ENCODE measurements at regions of chr4 and their contacts with region 1.

Region 1: GRCh38 chr4:4488405-4489404 is 53.1 kb downstream of the STX18 start:
- DNase-seq: no peak
- H3K4me3 ChIP-seq: no peak overlapping the region
- H3K27ac ChIP-seq: no peak overlapping the region
- H3K4me1 ChIP-seq: peaks cover 0 to 20% (median 3%) of the 10 kb centered on the region in 4 donors
- H3K27me3 ChIP-seq: no peaks in the 10 kb centered on the region
- CTCF ChIP-seq: peak; percentile 69 to 88 (median 79)
- EP300 ChIP-seq: no peak
- POLR2A ChIP-seq: no peak

Region 2: DNA sequence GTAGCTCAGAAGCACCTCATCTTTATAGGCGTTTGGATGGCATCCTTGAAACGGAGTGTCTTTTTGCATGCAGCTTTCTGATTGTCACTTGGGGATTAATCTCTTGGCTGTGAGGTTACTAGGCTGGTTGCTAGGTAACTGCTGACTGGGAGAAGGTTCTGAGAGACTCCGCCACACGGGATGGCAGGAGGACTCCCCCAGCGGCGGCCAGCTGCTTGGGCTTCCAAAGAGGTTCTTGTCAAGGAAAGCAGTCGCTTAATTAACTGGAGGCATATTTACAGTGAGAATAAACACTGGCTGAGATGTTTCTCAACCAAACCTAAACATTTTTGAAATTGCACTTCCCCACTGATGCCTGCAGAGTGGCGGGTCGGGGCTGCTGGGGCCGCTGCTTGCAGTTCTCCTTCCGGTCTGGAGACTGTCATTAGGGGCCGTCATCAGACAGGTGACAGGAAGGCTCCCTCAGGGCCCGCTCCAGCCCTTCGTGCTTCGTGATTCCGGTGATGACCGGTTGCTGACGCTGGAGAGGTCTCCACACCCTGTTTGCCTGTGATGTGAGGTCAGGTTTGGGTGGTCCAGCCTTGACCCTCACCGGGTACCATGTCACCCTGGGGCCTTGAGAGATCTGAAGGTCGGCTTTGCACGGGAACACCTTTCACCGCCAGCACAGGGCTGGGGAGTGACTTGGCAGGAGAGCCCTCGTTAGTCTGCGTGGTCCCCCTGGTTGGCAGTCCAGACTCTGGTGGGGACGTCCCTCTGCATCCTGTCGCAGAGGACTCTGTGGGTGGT is 92.7 kb before region 1 on chr4:
- intact Hi-C with region 1: no loop called
- DNase-seq: no peak
- H3K4me3 ChIP-seq: no peak overlapping the region
- H3K27ac ChIP-seq: no peak overlapping the region
- H3K4me1 ChIP-seq: peaks cover 0 to 5% (median 0%) of the 10 kb centered on the region in 4 donors
- H3K27me3 ChIP-seq: peaks cover 0 to 90% (median 0%) of the 10 kb centered on the region in 4 donors
- CTCF ChIP-seq: no peak
- EP300 ChIP-seq: no peak
- POLR2A ChIP-seq: no peak

Region 3: DNA sequence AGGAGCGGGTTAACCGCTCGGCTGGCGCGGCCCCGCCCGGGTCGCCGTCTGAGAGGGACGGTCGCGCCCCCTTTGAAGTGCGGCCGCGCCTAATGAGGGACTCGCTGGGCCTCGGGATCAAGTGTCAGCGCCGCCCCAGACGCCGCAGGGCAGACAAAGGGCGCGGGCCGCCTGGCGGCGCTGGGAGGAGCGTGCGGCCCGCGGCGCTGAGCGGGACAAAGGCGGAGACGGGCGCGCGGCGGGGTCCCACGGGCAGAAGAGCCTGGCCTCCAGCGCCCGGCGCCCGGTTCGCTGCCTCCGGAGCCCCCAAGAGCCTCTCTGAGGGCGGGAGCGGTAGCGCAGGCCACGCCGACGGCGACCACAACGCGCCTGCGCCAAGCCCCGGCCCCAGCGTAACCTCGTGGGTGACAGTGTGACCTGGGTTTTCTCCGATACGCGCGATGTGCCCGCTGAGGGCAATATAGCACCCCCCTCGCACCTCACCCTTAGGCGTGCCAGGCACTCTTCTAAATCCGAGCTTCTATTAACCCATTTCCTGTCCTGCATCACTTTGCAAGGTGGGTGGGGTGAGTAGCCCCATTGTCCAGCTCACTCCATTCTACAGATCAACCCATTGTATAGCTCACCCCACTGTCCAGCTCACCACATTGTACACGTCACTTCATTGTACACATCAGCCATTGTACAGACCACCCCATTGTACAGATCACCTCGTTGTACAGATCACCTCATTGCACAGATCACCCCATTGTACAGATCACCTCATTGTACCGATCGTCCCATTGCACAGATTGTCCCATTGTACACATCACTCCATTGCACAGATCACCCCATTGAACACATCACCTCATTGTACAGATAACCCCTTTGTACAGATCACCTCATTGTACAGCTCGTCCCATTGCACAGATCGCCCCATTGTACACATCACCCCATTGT is 86.8 kb after region 1 on chr4:
- intact Hi-C with region 1: loop called (anchors 10 kb)
- DNase-seq: no peak
- H3K4me3 ChIP-seq: peak overlapping the region; percentile 63 to 80 (median 73)
- H3K27ac ChIP-seq: peak overlapping the region; percentile 54 to 80 (median 65)
- H3K4me1 ChIP-seq: peaks cover 0 to 6% (median 2%) of the 10 kb centered on the region in 4 donors
- H3K27me3 ChIP-seq: no peaks in the 10 kb centered on the region
- CTCF ChIP-seq: peak; percentile 40 to 71 (median 47)
- EP300 ChIP-seq: no peak
- POLR2A ChIP-seq: no peak

Region 4: GRCh38 chr4:4859843-4860802 is 371.4 kb after region 1 on chr4:
- intact Hi-C with region 1: loop called (anchors 10 kb)
- DNase-seq: no peak
- H3K4me3 ChIP-seq: peak overlapping the region; percentile 60 to 76 (median 70)
- H3K27ac ChIP-seq: peak overlapping the region; percentile 30 to 70 (median 50)
- H3K4me1 ChIP-seq: peaks cover 45 to 84% (median 66%) of the 10 kb centered on the region in 4 donors
- H3K27me3 ChIP-seq: peaks cover 8 to 100% (median 84%) of the 10 kb centered on the region in 4 donors
- CTCF ChIP-seq: no peak
- EP300 ChIP-seq: no peak
- POLR2A ChIP-seq: no peak